Dendritic cell treated with granulocyte-macrophage colony-stimulating factor and Interleukin-4, amounts not matched to agents 40 ng/mL and 50 ng/mL, for 4 days (primary cell): ENCODE measurements at regions of chr11 and their contacts with region 1.

Region 1: GRCh38 chr11:62324738-62325556 is 12.3 kb upstream of the ASRGL1 start:
- H3K4me3 Mint-ChIP-seq: no peak overlapping the region
- H3K27ac Mint-ChIP-seq: no peak overlapping the region
- H3K4me1 Mint-ChIP-seq: peaks cover 27% of the 10 kb centered on the region
- H3K27me3 Mint-ChIP-seq: no peaks in the 10 kb centered on the region

Region 2: DNA sequence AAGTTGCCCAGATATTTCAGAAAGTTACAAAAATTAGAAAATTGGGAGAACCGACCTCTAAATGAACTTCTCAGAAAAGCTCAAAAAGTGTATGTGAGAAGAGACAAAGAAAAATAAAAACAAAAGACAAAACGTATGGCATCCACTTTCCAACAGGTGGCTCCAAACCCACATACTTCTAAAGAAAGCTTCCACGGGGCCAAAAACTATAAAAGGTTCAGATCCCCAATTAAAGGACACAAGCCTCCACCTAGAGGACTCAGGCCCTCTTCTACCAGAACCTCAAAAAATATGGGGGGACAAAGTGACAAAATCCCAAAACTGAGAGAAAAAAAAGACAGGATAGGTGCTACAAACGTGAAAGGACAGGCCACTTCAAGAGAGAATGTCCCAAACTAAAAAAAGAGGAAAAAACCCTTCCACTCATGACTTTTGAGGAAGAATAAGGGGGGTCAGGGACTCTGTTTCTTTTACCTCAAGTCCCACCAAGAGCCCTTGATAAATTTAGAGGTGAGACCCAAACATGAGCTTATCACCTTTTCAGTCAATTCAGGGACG is 107.7 kb before region 1 on chr11:
- intact Hi-C with region 1: loop called (anchors 5 kb)
- H3K4me3 Mint-ChIP-seq: no peak overlapping the region
- H3K27ac Mint-ChIP-seq: no peak overlapping the region
- H3K4me1 Mint-ChIP-seq: no peaks in the 10 kb centered on the region
- H3K27me3 Mint-ChIP-seq: peaks cover 4% of the 10 kb centered on the region

Region 3: DNA sequence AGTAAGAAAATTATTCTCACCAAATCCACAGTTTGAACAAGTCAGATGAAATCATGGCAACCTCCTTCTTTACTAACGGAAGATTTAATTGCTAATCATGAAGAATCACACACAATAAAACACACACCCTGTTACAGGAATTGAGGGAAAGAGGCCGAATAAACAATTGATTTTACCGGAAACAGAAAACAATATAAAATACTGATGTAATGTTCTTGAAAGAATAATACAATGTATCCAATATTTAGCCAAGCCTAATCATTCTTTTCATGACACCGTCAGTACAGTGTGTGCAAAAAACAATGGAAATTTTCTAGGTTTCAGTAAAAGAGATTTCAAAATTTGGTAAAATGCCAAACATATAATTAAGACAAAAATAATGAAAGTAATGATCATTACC is 35.7 kb after region 1 on chr11:
- intact Hi-C with region 1: no loop called
- H3K4me3 Mint-ChIP-seq: no peak overlapping the region
- H3K27ac Mint-ChIP-seq: no peak overlapping the region
- H3K4me1 Mint-ChIP-seq: no peaks in the 10 kb centered on the region
- H3K27me3 Mint-ChIP-seq: no peaks in the 10 kb centered on the region